Upper lobe of right lung (tissue), 1 donor: ENCODE measurements at regions of chr2 and their contacts with region 1.

Region 1: DNA sequence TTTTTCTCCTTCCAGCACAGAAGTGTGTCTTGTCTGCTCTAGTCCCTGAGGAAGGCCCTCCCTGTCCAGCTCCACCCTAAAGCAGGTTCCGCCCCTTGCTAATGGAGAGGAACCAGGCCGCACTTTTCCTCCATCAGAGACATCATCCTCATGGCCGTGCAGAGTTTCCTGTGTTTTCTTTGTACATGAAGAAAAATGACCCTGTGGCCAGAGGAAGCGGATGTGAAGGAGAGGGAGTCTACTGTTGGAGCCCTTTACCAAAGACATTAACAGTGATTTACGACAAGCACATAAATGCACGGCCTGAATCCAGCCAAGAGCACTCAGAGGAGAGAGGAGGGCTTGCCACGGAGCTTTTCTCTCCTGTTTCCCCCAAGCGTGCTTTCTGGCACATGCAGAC is 109.5 kb downstream of the RNF144A start:
- DNase-seq: no peak
- ATAC-seq: no peak
- H3K4me3 ChIP-seq: no peak overlapping the region
- H3K27ac ChIP-seq: peak overlapping the region; percentile 32
- H3K4me1 ChIP-seq: peaks cover 10% of the 10 kb centered on the region
- H3K27me3 ChIP-seq: no peaks in the 10 kb centered on the region
- CTCF ChIP-seq: no peak

Region 2: GRCh38 chr2:6917071-6917760 is 109.5 kb before region 1 on chr2 and contains the start of gene RNF144A:
- intact Hi-C with region 1: loop called (anchors 10 kb)
- DNase-seq: peak; percentile 86
- ATAC-seq: peak; percentile 95
- H3K4me3 ChIP-seq: peak within 1 kb of the TSS; percentile 62
- H3K27ac ChIP-seq: peak within 1 kb of the TSS; percentile 24
- H3K4me1 ChIP-seq: peaks cover 4% of the 10 kb centered on the region
- H3K27me3 ChIP-seq: no peaks in the 10 kb centered on the region
- CTCF ChIP-seq: peak; percentile 36
- total RNA-seq, gene RNF144A: 16.0 TPM